Left ventricle myocardium inferior (tissue), 1 donor: ENCODE measurements at regions of chr2 and their contacts with region 1.

Region 1: GRCh38 chr2:231612179-231613053 is 19.8 kb downstream of the TEX44 start:
- DNase-seq: peak; percentile 92
- H3K4me3 ChIP-seq: no peak overlapping the region
- H3K27ac ChIP-seq: peak overlapping the region; percentile 100
- H3K4me1 ChIP-seq: peaks cover 58% of the 10 kb centered on the region
- H3K27me3 ChIP-seq: no peaks in the 10 kb centered on the region
- CTCF ChIP-seq: peak; percentile 98

Region 2: DNA sequence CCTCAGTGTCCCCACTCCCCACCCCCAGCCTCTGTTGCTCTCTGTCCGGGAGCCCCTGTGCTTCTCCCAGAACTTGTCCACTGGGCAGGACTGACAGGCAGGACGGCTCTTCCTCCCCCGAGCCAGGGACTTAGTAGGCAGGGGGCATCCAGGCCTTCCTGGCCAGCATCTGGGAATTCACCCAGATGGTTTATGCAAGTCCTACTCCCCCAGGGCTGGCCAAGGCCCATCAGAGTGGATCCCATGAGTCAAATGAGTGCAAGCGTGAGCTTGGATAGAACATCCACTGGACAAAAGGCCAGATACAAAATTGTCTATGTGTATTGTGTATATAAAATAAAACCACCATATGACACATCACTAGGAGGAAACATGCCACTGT is 89.6 kb before region 1 on chr2:
- intact Hi-C with region 1: no loop called
- DNase-seq: no peak
- H3K4me3 ChIP-seq: no peak overlapping the region
- H3K27ac ChIP-seq: no peak overlapping the region
- H3K4me1 ChIP-seq: peaks cover 18% of the 10 kb centered on the region
- H3K27me3 ChIP-seq: no peaks in the 10 kb centered on the region
- CTCF ChIP-seq: no peak

Region 3: DNA sequence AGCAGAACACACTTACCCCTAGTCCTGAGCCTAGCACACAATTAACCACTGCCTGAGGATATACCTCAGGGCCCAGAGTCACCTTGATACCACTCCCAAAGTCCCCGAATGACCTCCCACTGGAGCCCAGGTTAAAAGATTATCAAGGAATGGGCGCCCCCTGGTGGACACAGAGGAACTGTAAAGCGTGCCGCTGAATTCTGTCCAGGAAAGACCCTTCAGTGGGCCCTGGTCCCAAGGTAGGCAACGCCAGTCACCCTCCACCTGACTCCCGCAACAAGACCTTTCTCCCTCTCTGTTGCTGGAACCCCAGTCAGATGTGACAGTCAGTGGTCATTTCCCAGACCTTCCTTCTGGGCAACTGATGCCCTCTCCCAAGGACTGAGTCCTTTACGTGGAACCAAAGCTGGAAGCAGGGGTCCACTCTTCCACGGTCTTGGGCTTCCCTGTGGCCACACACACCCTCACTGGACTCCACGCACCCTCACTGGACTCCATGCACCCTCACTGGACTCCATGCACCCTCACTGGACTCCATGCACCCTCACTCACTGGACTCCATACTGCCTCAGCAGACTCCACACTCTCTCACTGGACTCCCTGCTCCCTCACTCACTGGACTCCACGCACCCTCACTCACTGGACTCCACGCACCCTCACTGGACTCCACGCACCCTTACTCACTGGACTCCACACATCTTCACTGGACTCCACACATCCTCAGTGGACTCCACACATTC is 103.0 kb after region 1 on chr2:
- intact Hi-C with region 1: loop called (anchors 5 kb)
- DNase-seq: peak; percentile 74
- H3K4me3 ChIP-seq: no peak overlapping the region
- H3K27ac ChIP-seq: peak overlapping the region; percentile 75
- H3K4me1 ChIP-seq: peaks cover 65% of the 10 kb centered on the region
- H3K27me3 ChIP-seq: no peaks in the 10 kb centered on the region
- CTCF ChIP-seq: peak; percentile 91